Breast epithelium (tissue), 4 donors: ENCODE measurements at regions of chr7 and their contacts with region 1.

Region 1: DNA sequence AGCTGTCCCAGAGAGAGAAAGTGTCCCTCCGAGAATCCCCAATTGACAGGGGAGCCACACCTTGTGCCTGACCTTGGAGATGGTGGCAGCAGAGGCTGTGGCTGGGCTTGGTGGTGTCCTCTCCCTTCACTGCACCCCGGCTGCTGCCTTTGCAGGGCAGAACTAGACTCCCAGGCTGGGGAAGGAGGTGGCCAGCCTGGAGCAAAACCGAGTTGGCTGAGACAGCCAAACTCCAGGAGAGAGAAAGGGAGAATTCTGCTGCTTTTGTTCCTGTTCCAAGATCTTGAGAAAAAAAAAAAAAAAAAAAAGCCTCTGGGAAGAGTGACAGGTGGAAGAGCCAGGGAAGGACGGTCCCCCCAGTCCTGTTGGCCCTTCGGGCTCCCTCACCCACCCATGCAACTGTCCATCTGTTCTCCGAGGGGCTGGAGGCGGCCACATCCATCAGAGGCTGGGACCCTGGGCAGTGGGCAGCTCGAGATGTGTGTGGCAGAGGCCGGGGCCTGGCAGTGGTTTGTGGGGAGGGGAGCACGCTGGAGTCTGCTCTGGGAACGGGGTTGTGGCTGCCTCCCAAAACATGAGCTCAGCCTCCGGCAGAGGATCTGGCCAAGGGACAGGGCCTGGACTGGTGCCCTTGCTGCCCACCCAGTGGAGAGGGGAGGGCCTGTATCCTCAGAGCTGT is 35.5 kb downstream of the CLIP2 start:
- DNase-seq: no peak
- H3K4me3 ChIP-seq: no peak overlapping the region
- H3K27ac ChIP-seq: no peak overlapping the region
- H3K4me1 ChIP-seq: no peaks in the 10 kb centered on the region
- H3K27me3 ChIP-seq: no peaks in the 10 kb centered on the region
- CTCF ChIP-seq: no peak
- POLR2A ChIP-seq: no peak

Region 2: GRCh38 chr7:74240482-74240881 is 84.2 kb before region 1 on chr7:
- intact Hi-C with region 1: no loop called
- DNase-seq: no peak
- H3K4me3 ChIP-seq: no peak overlapping the region
- H3K27ac ChIP-seq: no peak overlapping the region
- H3K4me1 ChIP-seq: no peaks in the 10 kb centered on the region
- H3K27me3 ChIP-seq: no peaks in the 10 kb centered on the region
- CTCF ChIP-seq: no peak
- POLR2A ChIP-seq: no peak

Region 3: DNA sequence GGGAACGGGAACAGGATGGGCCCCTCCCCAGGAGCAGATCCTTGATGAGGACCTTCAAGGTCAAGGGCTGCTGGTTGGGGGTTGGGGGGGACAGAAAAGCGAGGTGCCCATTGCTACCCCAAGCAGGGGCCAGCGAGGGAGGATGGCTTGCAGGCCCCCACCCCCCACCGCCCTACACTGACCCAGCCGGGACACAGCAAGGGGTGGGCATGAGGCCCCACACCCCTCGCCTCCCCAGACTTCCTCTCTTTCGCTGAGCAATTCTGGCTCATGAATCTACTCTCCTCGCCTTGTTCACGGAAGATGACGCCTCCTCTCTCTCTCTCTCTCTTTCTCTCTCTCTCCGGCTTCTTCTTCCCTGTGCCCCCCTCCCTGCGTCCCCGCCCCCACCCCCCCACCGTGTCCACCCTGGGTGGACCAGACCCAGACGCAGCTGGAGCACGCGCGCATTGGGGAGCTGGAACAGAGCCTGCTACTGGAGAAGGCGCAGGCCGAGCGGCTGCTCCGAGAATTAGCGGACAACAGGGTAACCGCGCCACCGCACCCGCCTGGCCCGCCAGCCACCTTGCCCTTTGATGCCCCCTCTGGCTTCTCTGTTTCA is 47.9 kb after region 1 on chr7:
- intact Hi-C with region 1: loop called (anchors 1 kb)
- DNase-seq: no peak
- H3K4me3 ChIP-seq: peak overlapping the region in 2 of 3 donors; percentile 16 to 39
- H3K27ac ChIP-seq: peak overlapping the region in 1 of 2 donors; percentile 78
- H3K4me1 ChIP-seq: no peaks in the 10 kb centered on the region
- H3K27me3 ChIP-seq: no peaks in the 10 kb centered on the region
- CTCF ChIP-seq: no peak
- POLR2A ChIP-seq: no peak